K562 (cell line): ENCODE measurements at regions of chr17 and their contacts with region 1.

Region 1: DNA sequence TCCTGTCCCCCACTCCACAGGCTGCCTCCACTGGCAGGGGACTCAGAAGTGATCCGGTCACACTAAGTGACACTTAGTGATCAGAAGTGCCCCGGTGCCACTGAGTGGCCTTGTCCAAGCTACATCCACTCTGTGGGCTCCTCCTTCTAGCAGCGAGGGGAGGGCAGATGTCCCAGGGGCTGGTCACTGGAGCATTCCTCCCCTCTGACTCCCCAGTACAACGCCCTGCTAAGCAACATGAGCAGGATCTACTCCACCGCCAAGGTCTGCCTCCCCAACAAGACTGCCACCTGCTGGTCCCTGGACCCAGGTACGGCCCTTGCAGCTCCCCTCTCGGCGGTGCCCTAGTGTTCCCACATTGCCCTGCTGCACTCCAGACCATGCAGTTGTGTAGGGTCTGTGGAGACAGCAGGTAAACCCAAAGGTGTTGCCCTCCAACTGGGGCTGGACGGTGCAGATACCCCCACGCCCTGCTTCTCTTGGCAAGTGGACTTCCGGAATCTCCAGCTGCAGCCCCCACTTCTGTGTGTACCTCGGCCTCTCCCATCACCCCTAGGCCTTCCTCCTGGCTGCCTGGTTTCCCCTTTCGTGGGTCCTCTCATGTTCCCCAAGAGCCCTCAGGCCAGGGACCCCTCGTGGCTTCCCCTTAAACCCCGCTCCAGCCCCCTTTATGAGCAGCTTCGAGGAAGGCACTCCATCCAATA is 2.1 kb downstream of the ACE start:
- DNase-seq: peak; percentile 90 to 92 (median 92)
- ATAC-seq: peak; percentile 94
- H3K4me3 ChIP-seq: no peak overlapping the region
- H3K27ac ChIP-seq: no peak overlapping the region
- H3K4me1 ChIP-seq: peaks cover 21 to 47% of the 10 kb centered on the region in 2 experiments
- H3K27me3 ChIP-seq: no peaks in the 10 kb centered on the region; a peak in 1 of 5 replicates
- CTCF ChIP-seq: peak; percentile 95 to 98 (median 96)
- EP300 ChIP-seq: no peak
- POLR2A ChIP-seq: no peak
- RAD21 ChIP-seq: peak; percentile 90 to 98

Region 2: GRCh38 chr17:63395075-63395805 is 83.7 kb before region 1 on chr17:
- CTCF ChIA-PET with region 1: no interaction called
- POLR2A ChIA-PET with region 1: no interaction called
- in situ Hi-C with region 1: no loop called
- intact Hi-C with region 1: no loop called
- DNase-seq: no peak
- ATAC-seq: no peak
- H3K4me3 ChIP-seq: no peak overlapping the region
- H3K27ac ChIP-seq: no peak overlapping the region
- H3K4me1 ChIP-seq: no peaks in the 10 kb centered on the region; a peak in 1 of 5 replicates
- H3K27me3 ChIP-seq: no peaks in the 10 kb centered on the region
- CTCF ChIP-seq: no peak
- EP300 ChIP-seq: no peak
- POLR2A ChIP-seq: no peak
- RAD21 ChIP-seq: no peak

Region 3: DNA sequence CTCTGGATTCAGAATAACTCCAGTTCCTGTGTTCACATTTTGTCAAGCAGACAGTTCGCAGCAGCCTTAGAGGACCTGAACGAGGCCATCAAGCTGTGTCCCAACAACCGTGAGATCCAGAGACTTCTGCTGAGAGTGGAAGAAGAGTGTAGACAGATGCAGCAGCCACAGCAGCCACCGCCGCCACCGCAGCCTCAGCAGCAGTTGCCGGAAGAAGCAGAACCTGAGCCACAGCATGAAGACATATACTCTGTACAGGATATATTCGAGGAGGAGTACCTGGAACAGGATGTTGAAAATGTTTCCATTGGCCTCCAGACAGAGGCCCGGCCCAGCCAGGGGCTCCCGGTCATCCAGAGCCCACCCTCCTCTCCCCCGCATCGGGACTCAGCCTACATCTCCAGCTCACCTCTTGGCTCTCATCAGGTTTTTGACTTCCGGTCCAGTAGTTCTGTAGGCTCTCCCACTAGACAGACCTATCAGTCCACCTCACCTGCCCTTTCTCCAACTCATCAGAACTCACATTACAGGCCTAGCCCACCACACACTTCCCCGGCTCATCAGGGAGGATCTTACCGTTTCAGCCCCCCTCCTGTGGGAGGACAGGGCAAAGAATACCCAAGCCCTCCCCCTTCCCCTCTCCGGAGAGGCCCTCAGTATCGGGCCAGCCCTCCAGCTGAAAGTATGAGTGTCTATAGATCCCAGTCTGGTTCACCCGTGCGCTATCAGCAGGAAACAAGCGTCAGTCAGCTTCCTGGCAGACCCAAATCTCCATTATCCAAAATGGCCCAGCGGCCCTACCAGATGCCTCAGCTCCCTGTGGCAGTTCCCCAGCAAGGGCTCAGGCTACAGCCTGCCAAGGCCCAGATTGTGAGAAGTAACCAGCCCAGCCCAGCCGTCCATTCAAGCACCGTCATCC is 58.7 kb before region 1 on chr17:
- CTCF ChIA-PET with region 1: interaction called, 35 read pairs
- POLR2A ChIA-PET with region 1: interaction called, 3 read pairs
- in situ Hi-C with region 1: loop called (anchors 5 kb)
- intact Hi-C with region 1: loop called (anchors 1 kb)
- DNase-seq: peak; percentile 80 to 87 (median 84)
- ATAC-seq: peak; percentile 83
- H3K4me3 ChIP-seq: no peak overlapping the region; the same call in 1 of the 2 replicates
- H3K27ac ChIP-seq: peak overlapping the region; percentile 71
- H3K4me1 ChIP-seq: peaks cover 12 to 30% of the 10 kb centered on the region in 2 experiments
- H3K27me3 ChIP-seq: no peaks in the 10 kb centered on the region
- CTCF ChIP-seq: no peak
- EP300 ChIP-seq: peak; percentile 85; the same call in 1 of the 2 replicates
- POLR2A ChIP-seq: no peak
- RAD21 ChIP-seq: no peak

Region 4: DNA sequence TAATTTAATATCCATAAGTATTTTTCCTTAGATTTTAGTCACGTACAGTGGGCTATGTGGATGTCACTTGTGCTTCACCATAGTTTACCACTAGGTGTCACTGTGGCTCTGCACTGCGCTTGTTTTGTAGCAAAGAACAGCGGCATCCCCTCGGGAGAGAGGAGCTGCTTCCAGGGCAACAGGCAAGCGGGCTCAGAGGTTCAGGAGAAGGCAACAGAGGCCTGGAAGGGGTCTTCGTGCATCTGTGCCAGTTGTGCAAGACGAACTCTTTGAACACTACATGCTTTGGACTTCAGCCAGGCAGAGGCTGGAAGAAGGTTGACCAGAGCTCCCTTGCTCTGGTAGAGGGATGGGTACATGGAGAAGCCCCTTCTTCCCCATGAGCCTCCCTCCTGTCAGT is 53.5 kb before region 1 on chr17:
- CTCF ChIA-PET with region 1: interaction called, 35 read pairs
- POLR2A ChIA-PET with region 1: interaction called, 4 read pairs
- in situ Hi-C with region 1: loop called (anchors 5 kb)
- intact Hi-C with region 1: loop called (anchors 1 kb)
- DNase-seq: peak; percentile 76 to 88 (median 80)
- ATAC-seq: peak; percentile 89
- H3K4me3 ChIP-seq: no peak overlapping the region
- H3K27ac ChIP-seq: no peak overlapping the region
- H3K4me1 ChIP-seq: peaks cover 9 to 19% of the 10 kb centered on the region in 2 experiments
- H3K27me3 ChIP-seq: no peaks in the 10 kb centered on the region
- CTCF ChIP-seq: peak; percentile 91 to 96 (median 94)
- EP300 ChIP-seq: 0 out of 2 replicates have a peak, but pooled peaks have one; percentile 13
- POLR2A ChIP-seq: no peak
- RAD21 ChIP-seq: peak; percentile 98

Region 5: GRCh38 chr17:63434876-63435684 is 43.9 kb before region 1 on chr17:
- CTCF ChIA-PET with region 1: no interaction called
- POLR2A ChIA-PET with region 1: interaction called, 3 read pairs
- in situ Hi-C with region 1: no loop called
- intact Hi-C with region 1: loop called (anchors 2 kb)
- DNase-seq: no peak
- ATAC-seq: no peak
- H3K4me3 ChIP-seq: no peak overlapping the region
- H3K27ac ChIP-seq: peak overlapping the region; percentile 12; the same call in 1 of the 3 replicates
- H3K4me1 ChIP-seq: peaks cover 59 to 74% of the 10 kb centered on the region in 2 experiments
- H3K27me3 ChIP-seq: no peaks in the 10 kb centered on the region
- CTCF ChIP-seq: peak; percentile 34 to 43 (median 40); a peak in 4 of 6 replicates
- EP300 ChIP-seq: no peak
- POLR2A ChIP-seq: no peak
- RAD21 ChIP-seq: peak in 1 of 2 experiments; percentile 19; a peak in 1 of 4 replicates

Region 6: GRCh38 chr17:63445979-63446691 is 32.8 kb before region 1 on chr17 and contains the start of gene CYB561:
- CTCF ChIA-PET with region 1: interaction called, 6 read pairs
- POLR2A ChIA-PET with region 1: interaction called, 3 read pairs
- in situ Hi-C with region 1: no loop called
- intact Hi-C with region 1: loop called (anchors 2 kb)
- DNase-seq: peak; percentile 84 to 94 (median 92)
- ATAC-seq: peak; percentile 91
- H3K4me3 ChIP-seq: peak within 1 kb of the TSS; percentile 42
- H3K27ac ChIP-seq: peak within 1 kb of the TSS; percentile 94
- H3K4me1 ChIP-seq: peaks cover 42 to 60% of the 10 kb centered on the region in 2 experiments
- H3K27me3 ChIP-seq: no peaks in the 10 kb centered on the region
- CTCF ChIP-seq: peak; percentile 50 to 78 (median 56); a peak in 5 of 6 replicates
- EP300 ChIP-seq: no peak
- POLR2A ChIP-seq: no peak
- RAD21 ChIP-seq: peak in 1 of 2 experiments; percentile 28; a peak in 1 of 4 replicates
- polyA plus RNA-seq, gene CYB561: 4.0 to 4.9 TPM

Region 7: DNA sequence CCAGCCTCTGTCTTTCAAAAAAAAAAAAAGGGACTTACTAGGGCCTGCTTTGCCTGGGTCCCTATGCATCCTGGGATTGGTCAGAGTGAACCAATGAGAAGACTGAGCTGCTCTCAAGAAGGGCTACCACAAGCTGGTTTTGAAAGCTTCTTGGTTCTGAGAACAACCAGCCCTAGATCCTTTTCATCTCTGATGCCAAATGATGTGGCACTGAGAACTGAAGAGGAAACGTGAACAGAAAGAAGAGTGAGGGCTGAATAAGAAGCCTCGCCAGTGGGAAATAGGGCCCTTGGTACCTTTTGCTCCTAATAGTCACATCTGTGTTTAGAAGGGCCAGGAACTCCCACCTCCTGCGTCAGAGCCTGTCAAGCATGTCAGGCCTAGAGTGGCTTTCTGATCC is 132.4 kb after region 1 on chr17:
- CTCF ChIA-PET with region 1: interaction called, 3 read pairs
- POLR2A ChIA-PET with region 1: no interaction called
- in situ Hi-C with region 1: no loop called
- intact Hi-C with region 1: loop called (anchors 5 kb)
- DNase-seq: no peak
- ATAC-seq: no peak
- H3K4me3 ChIP-seq: no peak overlapping the region
- H3K27ac ChIP-seq: no peak overlapping the region
- H3K4me1 ChIP-seq: no peaks in the 10 kb centered on the region
- H3K27me3 ChIP-seq: no peaks in the 10 kb centered on the region
- CTCF ChIP-seq: no peak
- EP300 ChIP-seq: no peak
- POLR2A ChIP-seq: no peak
- RAD21 ChIP-seq: no peak